CD8-positive, alpha-beta memory T cell (primary cell): ENCODE measurements at regions of chr18 and their contacts with region 1.

Region 1: GRCh38 chr18:10560450-10561045 is 34.7 kb downstream of the NAPG start:
- DNase-seq: peak; percentile 11 to 53 (median 17)
- H3K4me3 ChIP-seq: no peak overlapping the region
- H3K4me3 Mint-ChIP-seq: peak overlapping the region in 1 of 7 donors; percentile 25
- H3K27ac ChIP-seq: no peak overlapping the region
- H3K27ac Mint-ChIP-seq: no peak overlapping the region
- H3K4me1 ChIP-seq: peaks cover 3% of the 10 kb centered on the region
- H3K4me1 Mint-ChIP-seq: peaks cover 12 to 16% (median 13%) of the 10 kb centered on the region in 3 donors
- H3K27me3 ChIP-seq: no peaks in the 10 kb centered on the region
- H3K27me3 Mint-ChIP-seq: no peaks in the 10 kb centered on the region

Region 2: DNA sequence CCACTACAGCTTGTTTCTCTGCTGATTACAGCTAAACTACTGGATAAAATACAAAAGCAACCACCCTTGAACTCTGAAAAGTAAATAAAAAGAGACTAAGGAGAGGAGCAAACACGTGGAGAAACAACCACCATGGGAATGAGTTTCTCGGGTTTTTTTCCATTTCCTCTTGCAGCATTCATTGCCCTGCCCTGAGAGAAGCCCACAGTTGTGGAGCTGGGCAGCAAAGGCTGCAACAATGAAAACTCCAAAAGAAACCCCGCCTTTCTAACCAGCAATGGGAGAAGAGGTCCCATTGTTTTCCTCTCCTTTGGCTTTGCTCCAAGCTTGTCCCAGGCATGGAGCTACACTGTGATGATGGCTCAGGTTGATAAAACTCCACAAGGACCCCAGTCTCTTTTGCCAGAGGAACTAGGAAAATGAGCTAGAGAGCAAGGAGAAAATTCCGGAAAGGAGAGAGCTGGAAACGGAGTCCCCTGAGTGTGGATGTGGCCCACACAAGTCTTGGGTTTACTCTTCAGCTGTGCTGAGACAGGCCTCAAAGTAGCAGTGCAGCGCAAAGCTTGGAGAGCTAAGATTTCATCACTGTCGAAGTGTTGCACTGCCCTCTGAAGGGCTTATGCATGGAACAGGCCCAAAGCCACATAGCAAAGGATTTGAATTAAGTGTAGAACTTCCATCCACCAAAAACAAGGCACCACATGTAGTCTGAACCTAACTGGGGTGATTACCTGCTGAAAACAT is 13.8 kb before region 1 on chr18:
- CTCF ChIA-PET with region 1: interaction called, 10 read pairs
- POLR2A ChIA-PET with region 1: no interaction called
- DNase-seq: no peak
- H3K4me3 ChIP-seq: no peak overlapping the region
- H3K4me3 Mint-ChIP-seq: no peak overlapping the region
- H3K27ac ChIP-seq: no peak overlapping the region
- H3K27ac Mint-ChIP-seq: no peak overlapping the region
- H3K4me1 ChIP-seq: no peaks in the 10 kb centered on the region
- H3K4me1 Mint-ChIP-seq: peaks cover 0 to 5% (median 3%) of the 10 kb centered on the region in 3 donors
- H3K27me3 ChIP-seq: no peaks in the 10 kb centered on the region
- H3K27me3 Mint-ChIP-seq: no peaks in the 10 kb centered on the region

Region 3: GRCh38 chr18:10571537-10571936 is 11.0 kb after region 1 on chr18:
- CTCF ChIA-PET with region 1: interaction called, 14 read pairs
- POLR2A ChIA-PET with region 1: no interaction called
- DNase-seq: no peak
- H3K4me3 ChIP-seq: no peak overlapping the region
- H3K4me3 Mint-ChIP-seq: no peak overlapping the region
- H3K27ac ChIP-seq: no peak overlapping the region
- H3K27ac Mint-ChIP-seq: no peak overlapping the region
- H3K4me1 ChIP-seq: no peaks in the 10 kb centered on the region
- H3K4me1 Mint-ChIP-seq: no peaks in the 10 kb centered on the region
- H3K27me3 ChIP-seq: no peaks in the 10 kb centered on the region
- H3K27me3 Mint-ChIP-seq: no peaks in the 10 kb centered on the region